Psoas muscle (tissue), 8 donors: ENCODE measurements at regions of chr13 and their contacts with region 1.

Region 1: GRCh38 chr13:50387051-50387581 is 371.9 kb downstream of the KCNRG start:
- DNase-seq: peak; percentile 61 to 82
- ATAC-seq: peak; percentile 92 to 96 (median 95)
- H3K4me3 ChIP-seq: peak overlapping the region; percentile 78
- H3K27ac ChIP-seq: peak overlapping the region; percentile 96
- H3K4me1 ChIP-seq: peaks cover 10% of the 10 kb centered on the region
- H3K27me3 ChIP-seq: no peaks in the 10 kb centered on the region
- CTCF ChIP-seq: no peak

Region 2: GRCh38 chr13:50421473-50422130 is 34.5 kb after region 1 on chr13:
- intact Hi-C with region 1: loop called in 1 of 2 experiments (anchors 2 kb)
- DNase-seq: no peak
- ATAC-seq: peak in 2 of 4 donors; percentile 35 to 39
- H3K4me3 ChIP-seq: no peak overlapping the region
- H3K27ac ChIP-seq: peak overlapping the region; percentile 87
- H3K4me1 ChIP-seq: peaks cover 67% of the 10 kb centered on the region
- H3K27me3 ChIP-seq: no peaks in the 10 kb centered on the region
- CTCF ChIP-seq: no peak

Region 3: GRCh38 chr13:50428183-50428877 is 41.2 kb after region 1 on chr13:
- intact Hi-C with region 1: loop called in 1 of 2 experiments (anchors 2 kb)
- DNase-seq: no peak
- ATAC-seq: peak; percentile 69 to 87 (median 81)
- H3K4me3 ChIP-seq: no peak overlapping the region
- H3K27ac ChIP-seq: peak overlapping the region; percentile 83
- H3K4me1 ChIP-seq: peaks cover 43% of the 10 kb centered on the region
- H3K27me3 ChIP-seq: no peaks in the 10 kb centered on the region
- CTCF ChIP-seq: no peak

Region 4: DNA sequence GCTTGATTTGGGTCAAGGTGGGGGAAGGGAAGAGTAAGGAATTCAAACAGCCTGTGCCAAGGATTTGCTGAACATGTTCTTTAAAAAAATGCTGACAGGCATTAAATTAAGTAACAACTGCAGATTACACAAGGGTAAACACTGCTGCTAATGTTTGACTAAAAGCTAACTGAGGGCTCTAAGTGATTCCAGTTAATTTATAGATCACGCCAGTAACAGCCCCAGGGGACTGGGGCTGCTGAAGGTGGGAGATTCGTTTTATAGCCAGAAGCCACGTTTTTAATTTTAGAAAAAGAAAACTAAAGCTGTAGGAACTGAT is 134.7 kb after region 1 on chr13:
- intact Hi-C with region 1: loop called in 1 of 2 experiments (anchors 5 kb)
- DNase-seq: no peak
- ATAC-seq: peak; percentile 64 to 91 (median 79)
- H3K4me3 ChIP-seq: peak overlapping the region; percentile 40
- H3K27ac ChIP-seq: peak overlapping the region; percentile 84
- H3K4me1 ChIP-seq: peaks cover 52% of the 10 kb centered on the region
- H3K27me3 ChIP-seq: no peaks in the 10 kb centered on the region
- CTCF ChIP-seq: no peak

Region 5: DNA sequence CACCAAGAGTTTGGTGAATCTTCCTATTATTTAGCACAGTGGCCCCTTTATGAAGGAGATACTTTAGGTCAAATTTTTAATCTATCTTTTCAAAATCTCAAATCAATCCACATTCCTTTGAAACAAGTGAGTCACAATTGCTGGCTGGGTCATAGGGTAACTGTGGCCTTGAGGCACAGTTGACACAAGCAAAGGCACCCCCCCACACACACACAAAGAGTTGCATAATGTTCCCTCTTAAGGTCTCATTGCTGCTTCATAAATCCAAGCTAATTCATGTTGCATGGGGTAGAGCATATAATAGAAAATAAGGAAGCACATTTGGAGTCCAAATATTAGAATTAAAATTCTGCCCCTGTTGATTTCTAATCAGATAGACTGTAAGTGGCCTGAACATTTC is 284.9 kb after region 1 on chr13:
- intact Hi-C with region 1: no loop called
- DNase-seq: no peak
- ATAC-seq: no peak
- H3K4me3 ChIP-seq: no peak overlapping the region
- H3K27ac ChIP-seq: no peak overlapping the region
- H3K4me1 ChIP-seq: peaks cover 5% of the 10 kb centered on the region
- H3K27me3 ChIP-seq: no peaks in the 10 kb centered on the region
- CTCF ChIP-seq: no peak